Posterior cingulate gyrus (tissue), 11 donors: ENCODE measurements at regions of chr3 and their contacts with region 1.

Region 1: DNA sequence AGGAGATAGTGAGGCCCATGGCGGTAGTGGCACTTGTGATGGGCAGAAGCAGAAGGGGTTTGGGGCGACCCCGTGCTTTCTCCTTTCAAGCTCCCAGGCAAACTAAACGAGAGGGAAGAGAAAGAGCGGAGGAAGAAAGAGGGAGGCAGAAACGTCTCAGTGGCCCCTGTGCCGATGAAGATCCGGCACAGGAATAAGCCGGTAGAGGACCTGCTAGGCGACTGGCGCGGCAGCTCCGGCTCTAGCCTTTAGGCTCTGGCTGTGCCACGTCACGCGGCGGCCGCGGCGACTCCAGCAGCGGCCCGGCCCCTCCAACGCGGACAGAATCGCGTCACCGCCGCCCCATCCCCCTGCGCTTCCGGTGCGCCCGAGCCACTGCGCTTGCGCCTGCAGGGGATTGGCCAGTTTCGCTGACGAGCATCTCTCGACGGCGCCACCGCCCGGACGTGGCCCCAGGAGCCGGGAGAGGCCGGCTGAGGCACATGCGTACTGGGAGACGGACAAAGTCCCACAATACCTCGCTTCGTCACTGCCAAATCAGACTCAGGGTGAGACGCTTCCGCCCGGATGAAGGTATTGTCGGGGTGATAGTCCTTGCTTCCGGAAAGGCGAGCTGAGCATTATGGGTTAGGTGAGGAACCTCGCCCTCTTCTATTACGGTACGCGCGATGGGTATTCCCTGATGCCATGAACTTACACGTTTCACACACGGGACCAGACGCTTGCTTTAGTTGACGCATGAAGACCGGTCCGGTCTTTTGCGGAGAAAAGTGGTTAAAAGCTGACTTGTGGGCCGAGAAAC is at the start of gene ARF4:
- DNase-seq: peak; percentile 97 to 100 (median 98)

Region 2: DNA sequence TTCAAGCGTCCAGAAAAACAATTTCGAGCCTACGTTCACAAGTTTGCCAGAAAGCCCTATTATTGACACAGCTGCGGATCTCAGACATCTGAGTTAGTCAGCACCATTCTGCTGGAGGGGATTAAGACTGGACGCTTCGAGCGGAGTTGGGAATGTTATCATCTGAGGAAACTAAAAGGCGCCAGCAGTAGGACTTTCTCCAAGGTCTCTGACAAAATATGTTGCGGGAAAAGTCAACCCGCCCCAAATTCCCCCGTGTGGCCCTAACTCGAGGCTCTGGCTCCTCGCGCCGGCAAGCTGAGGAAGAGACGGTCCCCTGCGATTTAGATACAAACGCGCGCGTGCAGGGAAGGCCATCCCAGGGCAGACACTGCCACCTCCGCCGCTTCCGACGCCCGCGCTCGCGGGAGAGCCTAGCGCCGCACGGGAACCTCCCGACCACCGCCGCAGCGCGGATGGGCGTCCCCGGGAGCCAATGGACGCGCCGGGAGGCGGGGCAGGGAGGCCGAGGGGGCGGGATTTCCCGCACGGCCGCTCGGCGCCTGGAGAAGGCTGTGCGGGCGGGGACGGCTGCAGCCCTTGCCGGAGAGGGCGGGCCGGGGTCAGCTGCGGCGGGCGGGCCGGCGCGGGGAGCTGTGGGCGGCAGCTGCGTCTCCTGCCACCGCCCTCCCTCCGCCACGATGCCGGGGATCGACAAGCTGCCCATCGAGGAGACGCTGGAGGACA is 370.0 kb before region 1 on chr3 and contains the start of gene APPL1:
- intact Hi-C with region 1: loop called (anchors 2 kb)
- DNase-seq: peak; percentile 88 to 99 (median 92)

Region 3: DNA sequence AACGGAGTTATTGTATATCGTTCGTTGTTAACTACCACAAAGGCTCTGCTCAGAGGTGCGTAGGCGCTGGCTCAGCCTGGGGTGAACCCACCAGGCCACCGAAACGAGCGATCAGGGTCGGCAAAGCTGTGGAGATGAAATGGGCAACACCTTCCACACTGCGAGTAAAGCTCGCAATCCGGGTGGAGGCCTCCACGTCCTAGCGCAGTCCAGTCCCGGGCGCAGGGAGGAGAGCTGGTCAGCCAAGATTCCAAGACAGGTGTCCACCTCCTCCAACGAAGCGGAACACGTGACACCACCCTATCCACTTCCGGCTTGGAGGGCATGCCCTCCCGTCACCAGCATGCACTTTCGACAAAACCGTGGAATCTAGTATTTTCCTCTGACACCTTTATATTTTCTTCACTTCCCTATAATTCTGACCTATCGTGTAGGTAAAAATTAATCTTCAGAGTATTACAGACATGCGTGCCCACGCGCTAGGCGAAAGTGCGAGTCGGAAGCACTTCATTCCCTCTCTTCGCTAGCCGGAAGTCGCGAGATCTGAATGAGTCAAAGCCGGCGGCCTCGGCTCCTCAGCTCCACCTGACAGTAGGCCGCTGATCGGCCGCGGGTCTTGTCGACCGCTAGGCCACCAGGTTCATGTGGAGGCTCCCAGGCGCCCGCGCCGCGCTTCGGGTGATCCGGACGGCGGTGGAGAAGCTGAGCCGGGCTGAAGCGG is 41.4 kb before region 1 on chr3 and contains the start of gene PDE12:
- intact Hi-C with region 1: loop called (anchors 2 kb)
- DNase-seq: peak; percentile 81 to 97 (median 87)

Region 4: DNA sequence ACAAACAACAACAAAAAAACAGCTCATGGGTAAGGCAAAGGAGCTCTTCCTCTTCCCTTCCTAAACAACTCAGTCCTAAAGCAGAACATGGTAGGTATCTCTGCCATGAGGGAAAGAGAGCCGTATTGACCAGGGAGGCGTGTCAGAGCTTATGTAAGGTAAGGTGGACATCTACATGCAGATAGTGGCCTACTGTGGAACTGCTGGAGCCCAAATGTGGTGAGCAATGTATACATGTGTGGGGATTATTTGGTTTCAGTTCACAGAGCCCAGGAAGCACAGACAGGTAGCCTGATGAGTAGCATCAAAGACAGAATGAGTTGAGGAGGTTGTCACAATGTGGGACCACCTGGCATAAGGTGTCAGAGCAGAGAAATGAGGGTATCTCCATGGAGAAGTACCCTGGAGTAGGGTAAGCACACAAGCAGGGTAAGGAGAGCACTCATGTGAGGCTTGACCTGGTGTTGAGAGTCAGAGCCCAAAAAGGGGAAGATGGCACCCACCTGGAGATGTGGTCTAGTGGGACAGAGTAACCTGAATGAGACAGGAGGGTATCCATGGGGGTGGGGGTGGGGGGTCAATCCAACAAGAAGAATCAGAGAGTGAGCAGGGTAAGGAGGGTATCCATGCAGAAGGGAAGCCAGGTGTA is 50.1 kb after region 1 on chr3:
- intact Hi-C with region 1: no loop called
- DNase-seq: no peak

Region 5: DNA sequence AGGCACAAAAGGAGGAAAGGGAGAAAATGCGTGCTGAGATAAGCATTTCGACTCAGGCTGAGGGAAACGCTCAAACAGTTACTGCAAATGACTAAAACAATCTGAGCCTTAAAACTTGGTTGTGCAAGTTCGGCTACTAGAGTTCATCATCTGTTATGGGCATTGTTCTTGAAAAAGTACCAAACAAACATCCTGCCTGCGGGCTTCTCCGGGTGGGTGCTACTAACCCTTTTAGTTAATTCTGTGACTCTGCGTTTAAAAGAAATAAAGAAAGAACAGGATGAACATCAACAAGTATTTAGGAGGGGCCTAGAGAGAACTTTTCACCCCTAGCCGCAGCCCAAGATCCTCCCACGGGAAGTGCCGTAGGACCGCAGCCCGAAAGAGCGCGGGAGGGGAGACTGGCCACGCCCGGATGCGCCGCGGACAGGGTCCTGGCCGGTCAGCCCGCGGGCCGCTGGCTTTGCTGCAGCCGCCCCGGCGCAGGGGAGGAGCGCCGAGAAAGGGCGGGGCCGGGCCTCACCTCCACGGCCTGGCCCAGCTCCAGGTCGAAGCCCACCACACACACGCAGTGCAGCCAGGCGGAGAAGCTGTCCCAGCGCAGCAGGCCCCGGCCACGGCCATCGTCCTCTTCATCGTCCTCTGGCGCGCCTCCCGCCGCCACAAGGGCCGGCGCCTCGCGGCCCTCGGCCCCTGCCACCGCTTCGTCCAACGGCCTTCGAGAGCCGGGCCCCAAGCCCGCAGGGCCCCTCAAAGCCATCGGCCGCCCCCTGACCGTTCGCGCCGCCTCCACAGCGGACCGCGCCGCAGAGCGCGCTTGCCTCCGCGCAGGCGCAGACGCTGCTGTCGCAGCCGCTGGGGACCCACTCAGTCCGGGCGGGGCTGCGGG is 95.2 kb after region 1 on chr3 and contains the start of gene DENND6A:
- intact Hi-C with region 1: loop called (anchors 5 kb)
- DNase-seq: peak; percentile 65 to 99 (median 95)

Region 6: DNA sequence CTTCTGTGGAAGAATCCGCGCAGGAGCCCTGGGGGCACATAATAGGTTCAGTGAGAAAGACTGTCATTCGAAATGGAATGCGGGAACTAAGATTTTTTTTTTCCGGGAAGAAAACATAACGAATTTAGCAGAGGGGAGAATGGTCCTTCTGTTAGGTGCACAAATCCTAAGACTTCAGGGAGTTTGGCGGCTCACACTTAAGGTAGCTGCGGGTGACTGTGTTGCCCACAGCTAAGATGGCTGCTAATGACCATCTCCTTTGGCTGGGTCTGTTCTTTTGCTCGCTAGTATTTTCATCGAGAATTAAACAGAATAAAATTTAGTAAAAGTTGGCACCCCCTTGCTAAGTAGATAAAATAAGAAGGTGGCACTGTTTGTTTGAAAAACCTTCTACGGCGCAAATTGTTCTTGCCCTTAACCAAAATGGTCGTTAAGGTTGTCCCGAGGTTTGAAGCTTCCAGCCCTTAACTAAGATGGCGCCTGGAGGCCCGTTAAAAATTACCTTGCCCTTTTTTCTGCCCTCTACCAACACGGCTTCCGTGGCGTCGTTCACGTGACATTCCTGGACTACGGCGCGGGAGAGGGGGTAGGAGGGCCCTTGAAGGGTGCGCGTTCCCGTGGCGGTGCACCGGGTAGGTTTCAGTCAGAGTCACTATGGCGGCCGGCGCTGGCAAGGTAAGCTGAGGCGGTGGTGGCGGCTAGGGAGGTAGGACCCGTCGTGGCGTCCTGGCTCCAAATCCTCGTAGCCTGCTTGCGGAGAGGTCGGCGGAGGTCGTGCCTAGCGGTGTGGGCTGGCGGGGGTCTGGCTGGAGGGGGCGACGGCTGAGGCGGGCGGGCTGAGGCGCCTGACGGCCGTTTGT is 158.6 kb after region 1 on chr3 and contains the start of gene SLMAP:
- intact Hi-C with region 1: loop called (anchors 2 kb)
- DNase-seq: peak; percentile 95 to 99 (median 98)